ENCODE measurements at regions of chr5 and their contacts with region 1.

Region 1: DNA sequence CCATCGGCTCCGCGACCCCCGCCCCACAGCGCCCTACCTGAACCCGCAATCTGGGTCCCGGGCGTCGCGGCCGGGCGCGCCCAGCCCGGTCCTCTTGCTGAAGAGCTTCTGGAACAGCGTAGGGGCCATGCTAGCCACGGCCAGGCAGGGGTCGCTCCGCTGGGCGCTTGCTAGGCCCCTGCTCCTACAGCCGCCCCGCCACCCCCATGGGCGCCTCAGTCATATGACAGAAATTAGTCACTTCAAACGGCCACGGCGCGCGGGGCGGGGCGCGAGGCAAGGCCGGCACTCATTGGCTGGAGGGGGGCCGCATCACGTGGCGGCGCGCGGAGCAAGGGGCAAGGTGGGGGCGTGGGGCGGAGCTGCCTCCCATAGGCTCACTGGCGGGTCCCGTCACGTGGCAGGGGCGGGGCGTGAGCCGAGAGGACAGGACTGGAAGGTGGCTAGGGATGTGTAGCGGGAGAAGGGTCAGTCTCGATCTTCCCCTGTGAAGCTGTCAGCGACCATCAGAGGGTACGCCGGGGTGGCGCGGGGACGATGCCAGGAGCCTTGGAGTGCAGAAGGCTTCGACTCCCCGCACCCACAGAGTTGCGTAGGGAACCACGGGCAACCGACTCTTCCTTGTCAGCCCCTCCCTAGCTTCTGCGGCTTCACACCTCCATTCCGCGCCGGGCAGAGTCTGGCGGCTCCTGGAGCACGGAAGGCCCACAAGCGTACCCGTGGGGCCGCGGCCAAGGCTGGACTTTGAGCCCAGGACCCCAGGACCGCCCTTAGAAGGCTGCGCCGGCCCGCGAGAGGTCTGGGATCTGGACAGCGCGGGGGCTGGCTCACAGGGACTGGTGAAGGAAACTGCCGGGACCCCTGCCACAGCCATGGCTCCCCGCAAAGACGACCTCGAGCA is at the start of gene FNIP1:
- DNase-seq: peak; percentile 97 to 99 (median 98)
- H3K4me3 ChIP-seq: peak within 1 kb of the TSS; percentile 86 to 96 (median 87)
- H3K4me3 Mint-ChIP-seq: peak within 1 kb of the TSS; percentile 94 to 97
- H3K27ac ChIP-seq: peak within 1 kb of the TSS; percentile 92 to 97
- H3K27ac Mint-ChIP-seq: peak within 1 kb of the TSS; percentile 93 to 99 (median 98)
- H3K4me1 ChIP-seq: peaks cover 18 to 44% of the 10 kb centered on the region in 2 donors
- H3K4me1 Mint-ChIP-seq: peaks cover 32% of the 10 kb centered on the region
- H3K27me3 ChIP-seq: no peaks in the 10 kb centered on the region
- H3K27me3 Mint-ChIP-seq: peaks cover 0 to 1% (median 0%) of the 10 kb centered on the region in 3 donors
- CTCF ChIP-seq: no peak
- polyA plus RNA-seq, gene FNIP1: 13.6 to 17.3 (median 16.3) TPM

Region 2: DNA sequence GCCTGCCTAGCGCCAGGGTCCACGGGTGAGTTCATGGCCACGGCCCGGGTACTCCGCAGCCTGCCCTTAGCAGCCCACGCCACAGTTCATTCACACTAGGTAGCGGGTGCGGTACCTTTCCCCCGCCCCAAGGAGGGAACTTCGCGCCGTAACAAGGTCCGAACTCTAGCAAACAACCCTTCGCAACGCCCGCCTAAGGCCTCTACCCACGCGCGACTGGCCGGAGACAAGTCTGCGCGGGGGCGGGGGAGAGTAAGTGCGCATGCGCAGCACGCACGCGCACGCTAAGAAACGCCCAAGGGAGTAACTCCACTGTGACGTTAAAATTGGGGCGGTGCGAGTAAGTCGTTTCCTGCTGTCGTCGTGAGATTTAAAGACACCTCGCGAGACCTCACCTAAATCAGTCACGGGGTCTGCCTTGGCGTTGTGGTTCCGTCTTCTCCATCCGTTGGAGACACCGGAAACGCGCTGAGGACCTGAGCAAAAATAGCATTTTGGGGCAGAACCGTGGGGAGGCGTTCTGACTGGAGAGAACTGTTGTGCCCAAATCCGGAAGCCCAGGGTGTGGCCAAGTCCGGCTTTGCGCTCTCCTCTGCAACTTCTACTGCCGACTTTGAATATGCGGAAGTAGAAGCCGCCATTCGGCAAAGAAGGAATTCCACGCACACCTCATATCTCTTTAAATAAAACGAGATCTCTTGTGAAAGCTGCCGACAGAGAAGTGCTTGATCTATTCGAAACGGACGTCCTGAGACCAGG is 161.9 kb before region 1 on chr5 and contains the start of gene RAPGEF6:
- intact Hi-C with region 1: loop called (anchors 2 to 5 kb)
- DNase-seq: peak; percentile 99 to 100 (median 100)
- H3K4me3 ChIP-seq: peak within 1 kb of the TSS; percentile 60 to 85 (median 82)
- H3K4me3 Mint-ChIP-seq: peak within 1 kb of the TSS; percentile 91 to 97
- H3K27ac ChIP-seq: peak within 1 kb of the TSS; percentile 90 to 99
- H3K27ac Mint-ChIP-seq: peak within 1 kb of the TSS; percentile 99 to 100 (median 99)
- H3K4me1 ChIP-seq: peaks cover 22 to 45% of the 10 kb centered on the region in 2 donors
- H3K4me1 Mint-ChIP-seq: peaks cover 16% of the 10 kb centered on the region
- H3K27me3 ChIP-seq: no peaks in the 10 kb centered on the region
- H3K27me3 Mint-ChIP-seq: no peaks in the 10 kb centered on the region
- CTCF ChIP-seq: no peak
- polyA plus RNA-seq, gene RAPGEF6: 2.9 to 4.8 (median 4.8) TPM

Region 3: DNA sequence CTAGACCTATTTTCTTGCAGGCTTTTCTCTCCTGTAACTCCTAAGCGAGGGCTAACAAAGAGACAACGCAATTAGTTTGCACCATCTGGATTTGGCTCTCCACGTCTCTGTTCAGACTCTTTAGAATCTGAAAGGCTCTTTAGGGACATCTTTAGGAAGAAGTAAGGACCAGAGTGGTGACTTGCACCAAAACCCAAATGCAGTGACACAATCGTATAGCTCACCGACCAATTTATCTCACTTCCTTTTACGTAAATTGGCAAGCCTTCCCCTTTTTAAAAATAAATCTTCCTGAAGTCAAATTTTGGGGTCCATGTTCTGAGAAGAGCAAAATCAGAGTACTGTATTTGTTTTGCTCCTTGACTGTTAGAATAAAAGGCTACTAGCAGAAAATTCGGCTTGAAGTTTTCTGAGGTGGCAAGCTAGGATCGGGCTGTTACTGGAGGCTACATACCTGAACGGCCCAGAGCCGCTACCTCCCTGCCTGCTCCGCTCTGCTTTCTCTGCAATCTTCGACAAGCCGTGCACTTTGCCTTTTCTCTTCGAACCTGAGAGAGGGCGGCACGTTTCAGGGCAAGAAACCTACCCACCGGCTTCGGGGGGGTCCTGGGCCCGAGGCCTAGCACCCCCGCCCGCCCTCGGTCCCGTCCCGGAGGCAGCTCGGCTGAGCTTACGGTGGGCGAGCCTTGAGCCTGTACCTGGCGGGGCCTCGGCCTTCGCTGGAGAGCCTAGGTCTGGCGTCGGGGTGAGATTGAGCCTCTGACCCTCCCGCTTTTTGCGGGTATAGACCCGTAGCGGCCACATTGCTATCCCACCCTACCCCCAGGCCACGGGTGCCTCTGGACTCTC is 147.9 kb after region 1 on chr5:
- intact Hi-C with region 1: loop called (anchors 10 kb)
- DNase-seq: peak; percentile 72 to 80 (median 77)
- H3K4me3 ChIP-seq: peak overlapping the region in 1 of 3 experiments; percentile 47
- H3K4me3 Mint-ChIP-seq: peak overlapping the region in 1 of 2 donors; percentile 52
- H3K27ac ChIP-seq: peak overlapping the region; percentile 40 to 87
- H3K27ac Mint-ChIP-seq: peak overlapping the region; percentile 85 to 95 (median 91)
- H3K4me1 ChIP-seq: peaks cover 18 to 32% of the 10 kb centered on the region in 2 donors
- H3K4me1 Mint-ChIP-seq: peaks cover 29% of the 10 kb centered on the region
- H3K27me3 ChIP-seq: no peaks in the 10 kb centered on the region
- H3K27me3 Mint-ChIP-seq: peaks cover 0 to 3% (median 0%) of the 10 kb centered on the region in 3 donors
- CTCF ChIP-seq: no peak

Measured in CD14-positive monocyte (primary cell).